ENCODE measurements at regions of chr20 and their contacts with region 1.

Region 1: DNA sequence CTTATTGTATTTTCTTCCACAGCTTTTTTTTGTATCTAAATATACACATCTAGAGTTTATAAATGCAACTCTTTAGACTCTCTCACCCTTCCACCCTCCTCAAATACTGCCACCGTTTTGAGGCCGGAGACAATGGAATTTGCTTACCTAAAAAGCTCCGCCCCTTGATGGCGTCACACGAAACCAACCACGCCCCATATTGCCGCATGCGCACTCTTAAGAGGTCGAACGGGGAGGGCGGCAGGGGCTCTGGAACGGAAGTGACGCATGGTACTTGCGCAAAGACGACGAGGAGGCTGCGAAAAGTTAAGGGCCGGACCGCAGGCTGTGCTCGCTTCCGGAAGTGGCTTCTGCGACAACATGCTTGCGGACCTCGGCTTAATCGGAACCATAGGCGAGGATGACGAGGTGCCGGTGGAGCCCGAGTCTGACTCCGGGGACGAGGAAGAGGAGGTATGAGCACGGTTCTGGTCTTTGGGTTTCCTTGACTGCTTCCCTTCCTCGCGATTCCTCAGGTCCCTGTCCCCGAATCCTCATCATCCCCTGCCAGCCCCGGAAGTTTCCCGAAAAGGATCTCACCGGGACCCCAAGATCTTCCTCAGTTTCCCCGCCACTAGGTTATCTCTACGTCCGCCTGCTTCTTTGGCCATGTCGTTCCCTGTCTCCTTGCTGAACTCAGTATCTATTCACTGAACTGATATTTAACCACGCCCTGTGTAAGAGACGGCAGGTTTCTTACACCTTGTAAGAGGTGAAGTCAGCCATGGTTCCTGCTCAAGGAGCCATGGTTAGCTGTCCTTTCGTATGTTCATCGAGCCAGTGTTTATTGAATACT is at the start of gene DDX27:
- DNase-seq: peak; percentile 99
- ATAC-seq: peak; percentile 91
- H3K4me3 Mint-ChIP-seq: peak within 1 kb of the TSS; percentile 88
- H3K27ac Mint-ChIP-seq: peak within 1 kb of the TSS; percentile 95
- H3K4me1 Mint-ChIP-seq: peaks cover 24% of the 10 kb centered on the region
- H3K27me3 Mint-ChIP-seq: no peaks in the 10 kb centered on the region
- CTCF ChIP-seq: no peak
- total RNA-seq, gene DDX27: 45.2 to 45.9 TPM

Region 2: DNA sequence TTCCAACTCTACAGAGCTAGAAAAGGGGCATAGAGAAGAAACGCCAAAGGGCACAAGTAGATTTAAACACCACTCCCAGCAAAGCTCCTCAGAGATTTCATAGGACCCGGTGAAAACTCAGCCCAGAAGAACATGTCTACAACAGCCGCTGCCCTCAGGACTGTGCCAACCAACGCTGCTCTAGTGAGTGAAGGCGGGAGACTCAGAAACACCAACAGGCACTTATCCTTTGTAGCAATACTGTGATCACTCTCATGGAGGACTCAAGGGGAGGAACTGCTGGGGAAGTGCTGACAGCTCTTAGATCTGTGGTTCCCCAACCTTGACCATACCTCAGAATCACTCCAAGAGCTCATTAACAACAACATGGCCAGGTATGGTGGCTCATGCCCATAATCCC is 70.7 kb before region 1 on chr20:
- CTCF ChIA-PET with region 1: interaction called, 16 read pairs
- POLR2A ChIA-PET with region 1: interaction called, 3 read pairs
- intact Hi-C with region 1: no loop called
- DNase-seq: no peak
- ATAC-seq: no peak
- H3K4me3 Mint-ChIP-seq: no peak overlapping the region
- H3K27ac Mint-ChIP-seq: peak overlapping the region; percentile 9
- H3K4me1 Mint-ChIP-seq: peaks cover 4% of the 10 kb centered on the region
- H3K27me3 Mint-ChIP-seq: no peaks in the 10 kb centered on the region
- CTCF ChIP-seq: no peak

Region 3: DNA sequence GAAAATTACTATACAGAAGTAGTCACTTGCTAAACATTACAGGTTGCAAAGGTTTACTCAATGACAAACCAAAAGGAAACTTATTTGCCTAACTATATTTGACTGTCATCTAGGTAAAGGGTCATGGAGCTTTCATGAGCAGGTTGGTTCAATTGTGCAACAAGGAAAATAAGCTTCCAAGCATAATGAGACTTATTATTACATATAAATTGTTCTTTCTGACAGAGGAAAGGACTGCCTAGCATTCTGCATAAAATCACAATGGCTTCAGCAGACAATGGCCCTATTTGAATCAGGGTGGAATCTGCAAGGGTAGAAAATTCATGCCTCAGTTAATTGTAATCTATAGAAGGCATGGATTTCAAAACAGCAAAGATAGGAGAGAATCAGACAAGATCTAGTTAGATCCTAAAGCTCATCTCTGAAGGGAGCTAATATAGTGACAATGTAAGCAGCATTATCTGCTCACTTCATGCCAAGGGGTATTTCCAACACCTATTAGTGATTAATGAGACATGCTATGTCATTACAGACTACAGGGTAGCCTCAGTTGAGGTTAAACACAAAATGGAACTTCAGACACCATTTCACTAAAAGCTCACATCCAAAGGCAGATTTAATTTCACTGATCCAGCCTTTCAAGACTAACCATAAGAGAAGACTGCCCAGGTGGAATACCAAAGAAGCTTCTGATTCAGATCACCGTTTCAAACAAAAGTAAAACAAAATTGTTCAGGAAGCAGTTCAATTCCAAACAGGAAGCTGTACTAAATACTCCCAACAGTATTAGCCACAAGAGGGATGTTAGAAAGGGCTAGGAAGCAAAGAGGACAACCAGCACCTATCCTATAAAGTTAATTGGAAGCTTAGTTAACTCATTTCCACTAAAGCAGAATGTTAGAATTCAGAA is 39.7 kb before region 1 on chr20:
- CTCF ChIA-PET with region 1: interaction called, 28 read pairs
- POLR2A ChIA-PET with region 1: no interaction called
- intact Hi-C with region 1: loop called (anchors 5 kb)
- DNase-seq: no peak
- ATAC-seq: no peak
- H3K4me3 Mint-ChIP-seq: no peak overlapping the region
- H3K27ac Mint-ChIP-seq: peak overlapping the region; percentile 43
- H3K4me1 Mint-ChIP-seq: peaks cover 53% of the 10 kb centered on the region
- H3K27me3 Mint-ChIP-seq: no peaks in the 10 kb centered on the region
- CTCF ChIP-seq: no peak

Region 4: DNA sequence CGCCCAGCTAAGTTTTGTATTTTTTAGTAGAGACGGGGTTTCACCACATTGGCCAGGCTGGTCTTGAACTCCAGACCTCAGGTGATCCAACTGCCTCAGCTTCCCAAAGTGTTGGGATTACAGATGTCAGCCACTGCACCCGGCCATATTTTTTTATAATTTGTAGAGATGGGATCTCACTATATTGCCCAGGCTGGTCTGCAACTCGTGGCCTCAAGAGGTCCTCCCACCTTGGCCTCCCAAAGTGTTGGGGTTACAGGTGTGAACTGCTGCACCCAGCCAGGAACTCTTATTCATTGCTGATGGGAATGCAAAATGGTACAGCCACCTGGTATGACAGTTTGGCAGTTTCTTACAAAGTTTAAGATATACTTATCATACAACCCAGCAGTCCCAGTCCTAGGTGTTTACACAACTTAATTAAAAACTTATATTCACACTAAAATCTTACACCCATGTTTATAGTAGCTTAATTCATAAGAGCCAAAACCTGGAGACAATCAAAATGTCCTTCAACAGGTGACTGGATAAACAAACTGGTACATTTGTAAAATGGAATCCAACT is 19.5 kb before region 1 on chr20:
- CTCF ChIA-PET with region 1: interaction called, 49 read pairs
- POLR2A ChIA-PET with region 1: no interaction called
- intact Hi-C with region 1: no loop called
- DNase-seq: no peak
- ATAC-seq: no peak
- H3K4me3 Mint-ChIP-seq: no peak overlapping the region
- H3K27ac Mint-ChIP-seq: no peak overlapping the region
- H3K4me1 Mint-ChIP-seq: no peaks in the 10 kb centered on the region
- H3K27me3 Mint-ChIP-seq: no peaks in the 10 kb centered on the region
- CTCF ChIP-seq: no peak

Region 5: DNA sequence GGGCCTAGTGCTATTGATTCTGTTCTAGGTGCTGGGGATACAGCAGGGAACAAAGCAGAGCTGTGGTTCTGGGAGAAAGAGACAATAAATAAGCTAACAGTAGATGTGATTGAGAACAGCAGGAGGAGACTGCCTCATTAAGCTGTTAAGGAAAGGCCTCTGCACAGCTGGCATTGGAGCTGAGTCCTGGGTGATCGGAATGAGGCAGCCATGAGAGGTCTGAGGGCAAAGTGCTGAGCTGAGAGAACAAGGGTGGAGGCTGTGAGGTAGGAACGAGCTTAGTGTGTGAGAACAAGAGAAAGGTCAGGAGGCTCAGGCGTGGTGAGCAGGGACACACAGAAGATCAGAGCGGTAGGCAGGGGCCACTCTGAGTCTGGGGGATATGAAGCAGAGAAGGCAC is 18.2 kb after region 1 on chr20:
- CTCF ChIA-PET with region 1: interaction called, 12 read pairs
- POLR2A ChIA-PET with region 1: interaction called, 4 read pairs
- intact Hi-C with region 1: no loop called
- DNase-seq: no peak
- ATAC-seq: no peak
- H3K4me3 Mint-ChIP-seq: no peak overlapping the region
- H3K27ac Mint-ChIP-seq: no peak overlapping the region
- H3K4me1 Mint-ChIP-seq: no peaks in the 10 kb centered on the region
- H3K27me3 Mint-ChIP-seq: no peaks in the 10 kb centered on the region
- CTCF ChIP-seq: no peak

Region 6: DNA sequence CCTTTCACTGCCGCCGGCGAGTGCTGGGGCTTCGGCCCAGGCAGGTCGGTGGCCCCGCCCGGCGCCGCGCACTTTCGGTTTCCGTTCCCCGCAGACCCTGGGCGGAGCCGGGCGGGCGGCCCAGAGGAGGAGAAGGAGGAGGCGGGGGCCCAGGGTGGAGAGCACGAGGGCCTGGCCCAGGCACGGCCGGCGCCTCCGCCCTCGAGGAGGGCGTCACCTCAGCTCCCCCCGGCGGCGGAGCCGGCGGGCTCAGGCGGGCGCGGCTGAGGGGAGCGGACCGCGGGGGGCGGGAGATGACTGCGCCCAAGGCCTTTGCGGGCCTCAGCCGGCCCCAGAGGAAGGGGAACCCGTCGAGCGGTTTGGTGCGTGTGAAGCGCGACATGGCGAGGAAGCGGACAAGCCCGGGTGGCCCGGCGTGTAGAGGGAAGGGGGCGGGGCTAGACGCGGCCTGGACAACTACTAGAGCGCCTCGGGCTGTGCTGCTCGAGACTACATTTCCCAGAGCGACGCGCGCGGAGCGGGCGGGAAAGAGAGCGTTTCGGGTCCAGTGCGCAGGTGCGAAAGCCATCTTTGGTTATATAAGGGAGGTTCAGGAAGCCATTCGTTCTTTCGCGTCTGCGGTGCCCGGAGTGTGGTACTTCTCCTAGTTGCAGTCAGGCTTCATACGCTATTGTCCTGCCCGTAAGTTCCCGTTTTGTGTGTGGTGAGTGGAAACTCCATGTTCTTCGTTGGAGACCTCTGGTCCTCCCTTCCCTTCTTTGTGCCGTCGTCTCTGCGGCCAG is 58.9 kb after region 1 on chr20 and contains the start of gene ZNFX1:
- CTCF ChIA-PET with region 1: interaction called, 7 read pairs
- POLR2A ChIA-PET with region 1: interaction called, 18 read pairs
- intact Hi-C with region 1: no loop called
- DNase-seq: peak; percentile 100
- ATAC-seq: peak; percentile 81
- H3K4me3 Mint-ChIP-seq: peak within 1 kb of the TSS; percentile 100
- H3K27ac Mint-ChIP-seq: peak within 1 kb of the TSS; percentile 100
- H3K4me1 Mint-ChIP-seq: peaks cover 45% of the 10 kb centered on the region
- H3K27me3 Mint-ChIP-seq: peaks cover 2% of the 10 kb centered on the region
- CTCF ChIP-seq: no peak
- total RNA-seq, gene ZNFX1: 27.4 to 27.7 TPM

Region 7: DNA sequence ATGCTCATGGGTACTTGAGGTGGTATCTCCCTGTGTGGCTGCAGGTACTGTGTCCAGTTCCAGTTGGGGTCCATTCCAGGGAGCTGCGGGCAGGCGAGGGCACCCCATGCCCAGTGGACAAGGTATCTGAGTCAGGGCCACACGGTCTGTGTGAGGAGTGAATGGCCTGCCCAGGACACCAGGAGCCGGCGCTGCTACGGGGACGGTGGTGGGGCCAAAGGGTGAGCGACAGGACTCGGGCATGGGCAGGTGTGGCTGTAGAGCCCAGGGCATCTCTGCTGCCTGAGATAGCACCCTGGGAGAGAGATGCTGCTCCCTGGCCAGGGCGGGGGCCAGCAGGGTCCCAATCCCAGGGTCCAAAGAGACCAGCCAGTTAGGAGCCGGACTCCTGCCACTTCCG is 116.2 kb after region 1 on chr20:
- CTCF ChIA-PET with region 1: no interaction called
- POLR2A ChIA-PET with region 1: no interaction called
- intact Hi-C with region 1: no loop called
- DNase-seq: no peak
- ATAC-seq: no peak
- H3K4me3 Mint-ChIP-seq: no peak overlapping the region
- H3K27ac Mint-ChIP-seq: no peak overlapping the region
- H3K4me1 Mint-ChIP-seq: no peaks in the 10 kb centered on the region
- H3K27me3 Mint-ChIP-seq: peaks cover 18% of the 10 kb centered on the region
- CTCF ChIP-seq: no peak

Region 8: DNA sequence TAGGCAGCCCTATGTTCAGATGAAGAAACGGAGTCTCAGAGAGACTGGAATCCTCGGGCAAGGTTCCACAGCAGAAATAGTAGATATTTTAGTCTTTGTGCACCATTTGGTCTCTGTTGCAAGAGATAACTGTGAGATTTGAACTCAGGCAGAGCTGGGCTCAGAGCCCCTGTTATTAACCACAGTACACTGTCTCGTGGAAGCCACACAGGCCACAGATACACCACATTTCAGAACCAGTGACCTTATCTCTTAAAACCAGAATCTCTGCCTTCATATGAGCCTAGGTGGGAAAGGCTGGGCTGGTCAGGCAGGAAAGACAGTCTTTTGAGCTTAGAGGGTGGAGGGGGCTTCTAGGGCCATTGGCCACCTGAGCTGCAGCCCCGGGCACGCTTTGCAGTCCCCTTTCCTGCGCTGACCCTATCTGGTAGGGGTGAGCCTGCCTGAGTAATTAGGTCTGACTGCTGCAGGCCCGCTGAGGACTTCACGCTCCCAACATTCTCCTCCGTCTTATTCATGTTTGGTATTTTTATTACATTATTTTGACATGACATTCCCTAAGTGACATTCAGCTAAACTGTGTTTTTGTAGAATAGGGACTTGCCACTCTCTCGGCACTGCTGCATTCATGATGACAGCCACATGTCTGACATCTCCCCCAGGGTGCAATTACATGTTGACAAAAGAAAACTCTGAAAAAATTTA is 192.1 kb after region 1 on chr20:
- CTCF ChIA-PET with region 1: no interaction called
- POLR2A ChIA-PET with region 1: no interaction called
- intact Hi-C with region 1: no loop called
- DNase-seq: no peak
- ATAC-seq: no peak
- H3K4me3 Mint-ChIP-seq: no peak overlapping the region
- H3K27ac Mint-ChIP-seq: no peak overlapping the region
- H3K4me1 Mint-ChIP-seq: no peaks in the 10 kb centered on the region
- H3K27me3 Mint-ChIP-seq: peaks cover 17% of the 10 kb centered on the region
- CTCF ChIP-seq: no peak